ENCODE measurements at regions of chr1 and their contacts with region 1.

Region 1: DNA sequence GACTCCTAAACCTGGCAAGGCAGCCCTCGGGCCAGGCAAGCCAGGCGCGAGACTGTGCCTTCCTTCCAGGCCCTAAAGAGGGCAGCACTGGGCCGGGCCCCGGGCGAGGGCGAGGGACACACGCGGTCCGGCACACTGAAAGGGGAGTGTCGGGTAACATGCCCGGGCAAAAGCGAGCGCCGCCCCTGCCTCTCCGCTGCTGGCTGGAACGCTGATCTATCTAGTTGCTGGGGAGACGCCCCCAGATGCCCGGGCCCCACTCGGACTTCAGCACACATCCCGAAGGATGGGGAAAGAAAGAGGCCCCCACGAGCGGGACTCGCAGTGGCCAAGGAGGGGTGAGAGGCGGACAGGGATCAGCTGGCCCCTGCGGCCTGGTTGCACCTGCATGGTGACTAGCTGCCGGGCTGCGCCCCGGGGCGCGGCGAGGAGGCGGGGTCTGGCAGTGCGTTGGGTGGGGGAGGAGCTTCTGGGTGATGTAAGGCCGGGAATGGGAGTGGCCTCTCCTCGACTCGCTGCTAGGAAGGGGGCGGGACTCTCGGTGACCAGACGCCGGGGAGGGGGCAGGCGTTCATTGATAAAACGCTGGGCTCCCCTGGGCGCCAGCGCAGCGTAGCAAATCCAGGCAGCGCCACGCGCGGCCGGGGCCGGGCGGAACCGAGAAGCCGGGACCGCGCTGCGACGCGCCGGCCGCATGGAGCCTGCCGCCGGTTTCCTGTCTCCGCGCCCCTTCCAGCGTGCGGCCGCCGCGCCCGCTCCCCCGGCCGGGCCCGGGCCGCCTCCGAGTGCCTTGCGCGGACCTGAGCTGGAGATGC is at the start of gene PLK3:
- DNase-seq: peak; percentile 98 to 99 (median 99)
- ATAC-seq: peak; percentile 95 to 96
- H3K4me3 ChIP-seq: peak within 1 kb of the TSS; percentile 72
- H3K27ac ChIP-seq: peak within 1 kb of the TSS; percentile 84
- H3K4me1 ChIP-seq: peaks cover 10% of the 10 kb centered on the region
- H3K27me3 ChIP-seq: no peaks in the 10 kb centered on the region
- total RNA-seq, gene PLK3: 6.0 to 11.4 (median 8.2) TPM

Region 2: GRCh38 chr1:44819608-44820327 is 19.8 kb after region 1 on chr1:
- intact Hi-C with region 1: loop called in 1 of 4 experiments (anchors 2 kb)
- DNase-seq: peak; percentile 79 to 92 (median 91)
- ATAC-seq: peak; percentile 90 to 91
- H3K4me3 ChIP-seq: peak overlapping the region; percentile 38
- H3K27ac ChIP-seq: peak overlapping the region; percentile 97
- H3K4me1 ChIP-seq: peaks cover 2% of the 10 kb centered on the region
- H3K27me3 ChIP-seq: no peaks in the 10 kb centered on the region

Region 3: GRCh38 chr1:44830900-44831304 is 30.9 kb after region 1 on chr1:
- intact Hi-C with region 1: loop called in 1 of 4 experiments (anchors 5 kb)
- DNase-seq: no peak
- ATAC-seq: no peak
- H3K4me3 ChIP-seq: no peak overlapping the region
- H3K27ac ChIP-seq: no peak overlapping the region
- H3K4me1 ChIP-seq: no peaks in the 10 kb centered on the region
- H3K27me3 ChIP-seq: no peaks in the 10 kb centered on the region